ENCODE measurements at regions of chr7 and their contacts with region 1.

Region 1: GRCh38 chr7:117405519-117405918 is 21.8 kb downstream of the ASZ1 start:
- DNase-seq: no peak
- H3K4me3 ChIP-seq: no peak overlapping the region
- H3K27ac ChIP-seq: no peak overlapping the region
- H3K4me1 ChIP-seq: no peaks in the 10 kb centered on the region
- H3K27me3 ChIP-seq: no peaks in the 10 kb centered on the region
- CTCF ChIP-seq: peak; percentile 21; the same call in 1 of the 2 replicates

Region 2: DNA sequence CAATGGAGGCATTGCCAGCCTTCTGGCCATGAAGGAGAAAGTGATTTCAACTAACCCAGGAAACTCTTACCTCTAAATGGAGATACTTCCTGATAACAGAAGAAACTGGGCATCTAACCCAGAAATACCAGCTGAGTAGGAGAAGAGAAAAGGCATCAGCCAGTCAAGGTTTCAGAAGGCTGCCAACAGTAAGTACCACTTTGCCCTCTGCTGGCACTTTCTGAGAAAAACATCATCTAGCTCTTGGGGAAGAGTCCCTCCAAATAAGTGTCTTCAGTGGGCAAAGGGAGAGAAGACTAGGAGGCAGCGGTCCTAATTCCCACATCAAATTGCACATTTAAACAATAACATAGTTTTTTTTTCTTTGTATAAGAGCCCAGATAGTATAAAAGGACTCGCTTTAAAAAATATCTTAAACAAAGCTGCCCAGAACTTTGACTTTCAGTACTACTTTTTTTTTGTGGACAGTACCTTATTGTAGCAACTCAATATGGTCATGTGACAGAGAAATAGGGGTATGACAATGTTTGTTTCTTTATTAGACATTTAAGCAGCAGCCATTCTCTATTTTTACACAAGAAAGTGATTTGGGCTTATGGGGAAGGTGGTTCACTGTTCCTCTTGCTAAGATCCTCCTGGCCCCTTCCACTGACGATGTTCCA is 310.4 kb after region 1 on chr7:
- CTCF ChIA-PET with region 1: no interaction called
- POLR2A ChIA-PET with region 1: no interaction called
- intact Hi-C with region 1: loop called (anchors 5 kb)
- DNase-seq: peak; percentile 78
- H3K4me3 ChIP-seq: no peak overlapping the region
- H3K27ac ChIP-seq: no peak overlapping the region
- H3K4me1 ChIP-seq: peaks cover 9% of the 10 kb centered on the region
- H3K27me3 ChIP-seq: no peaks in the 10 kb centered on the region
- CTCF ChIP-seq: peak; percentile 68